Activated naive CD4-positive, alpha-beta T cell treated with anti-CD3 and anti-CD28 coated beads for 36 hours (primary cell): ENCODE measurements at regions of chr2 and their contacts with region 1.

Region 1: GRCh38 chr2:144848423-144848822 is 328.5 kb upstream of the ZEB2 start:
- DNase-seq: no peak
- H3K4me3 Mint-ChIP-seq: no peak overlapping the region
- H3K27ac Mint-ChIP-seq: no peak overlapping the region
- H3K4me1 Mint-ChIP-seq: no peaks in the 10 kb centered on the region
- H3K27me3 Mint-ChIP-seq: no peaks in the 10 kb centered on the region

Region 2: GRCh38 chr2:144812288-144812687 is 36.1 kb before region 1 on chr2:
- CTCF ChIA-PET with region 1: no interaction called
- intact Hi-C with region 1: loop called (anchors 1 kb)
- DNase-seq: no peak
- H3K4me3 Mint-ChIP-seq: no peak overlapping the region
- H3K27ac Mint-ChIP-seq: no peak overlapping the region
- H3K4me1 Mint-ChIP-seq: no peaks in the 10 kb centered on the region
- H3K27me3 Mint-ChIP-seq: no peaks in the 10 kb centered on the region